ENCODE measurements at regions of chr1 and their contacts with region 1.

Region 1: GRCh38 chr1:208245185-208245705 is 1.1 kb upstream of the PLXNA2 start:
- DNase-seq: peak; percentile 81 to 82
- ATAC-seq: peak; percentile 68 to 71
- H3K4me3 ChIP-seq: peak overlapping the region; percentile 78 to 100 (median 86)
- H3K27ac ChIP-seq: peak overlapping the region; percentile 88 to 97 (median 92)
- H3K4me1 ChIP-seq: peaks cover 32% of the 10 kb centered on the region in 2 donors
- H3K27me3 ChIP-seq: no peaks in the 10 kb centered on the region
- CTCF ChIP-seq: peak; percentile 67 to 92 (median 85)
- POLR2A ChIP-seq: no peak

Region 2: DNA sequence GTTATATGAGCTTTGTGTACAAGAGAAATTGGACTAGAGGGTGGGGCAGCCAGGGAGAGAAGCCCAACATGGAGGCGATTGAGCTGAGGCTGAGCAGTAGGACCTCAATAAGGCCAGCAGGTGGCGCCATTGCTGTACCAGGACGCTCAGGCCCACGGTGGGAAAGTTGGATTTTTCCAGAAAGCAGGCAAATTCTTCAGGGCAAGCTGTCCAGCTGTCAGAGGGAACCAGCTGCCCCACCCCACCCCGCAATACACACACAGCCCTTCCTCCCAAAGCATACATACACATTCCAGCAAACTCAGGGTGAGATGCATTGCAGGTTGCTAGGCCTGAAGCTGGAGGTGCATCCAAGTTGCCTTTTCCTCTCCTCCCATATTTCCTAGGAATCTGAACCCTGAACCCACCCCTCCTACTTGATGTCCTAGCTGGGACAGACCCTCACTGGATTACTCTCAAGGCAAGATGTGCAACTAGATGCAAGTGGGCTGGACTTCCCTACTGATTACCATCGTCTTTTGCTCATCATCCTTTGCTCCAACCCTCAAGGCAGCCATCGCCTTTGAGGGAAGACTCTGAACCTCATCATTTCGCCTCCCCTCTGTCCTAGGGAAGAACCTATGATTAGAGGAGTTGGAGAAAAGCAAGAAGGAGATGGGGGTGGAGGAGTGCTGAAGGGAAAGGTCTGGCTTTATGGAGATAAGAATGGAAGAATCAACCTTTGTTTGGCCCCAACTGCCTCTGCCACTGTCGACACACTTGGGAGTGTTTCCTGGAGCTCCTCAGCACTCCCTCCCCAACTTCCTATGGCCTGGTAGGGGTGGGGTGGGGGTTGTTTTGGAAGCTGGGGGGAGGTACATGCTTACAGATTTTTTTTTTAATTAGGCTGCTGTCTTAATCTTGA is 359.9 kb before region 1 on chr1:
- in situ Hi-C with region 1: no loop called
- intact Hi-C with region 1: loop called (anchors 10 kb)
- DNase-seq: peak; percentile 72 to 76
- ATAC-seq: peak; percentile 83 to 89
- H3K4me3 ChIP-seq: no peak overlapping the region
- H3K27ac ChIP-seq: peak overlapping the region; percentile 21 to 81 (median 74)
- H3K4me1 ChIP-seq: peaks cover 42 to 55% of the 10 kb centered on the region in 2 donors
- H3K27me3 ChIP-seq: no peaks in the 10 kb centered on the region
- CTCF ChIP-seq: peak; percentile 95 to 98 (median 97)
- POLR2A ChIP-seq: no peak

Region 3: GRCh38 chr1:208024406-208024805 is 220.8 kb before region 1 on chr1:
- in situ Hi-C with region 1: loop called (anchors 5 to 10 kb)
- intact Hi-C with region 1: loop called (anchors 1 kb)
- DNase-seq: no peak
- ATAC-seq: no peak
- H3K4me3 ChIP-seq: no peak overlapping the region
- H3K27ac ChIP-seq: peak overlapping the region; percentile 55 to 66 (median 62)
- H3K4me1 ChIP-seq: peaks cover 14 to 19% of the 10 kb centered on the region in 2 donors
- H3K27me3 ChIP-seq: no peaks in the 10 kb centered on the region
- CTCF ChIP-seq: no peak
- POLR2A ChIP-seq: no peak

Region 4: GRCh38 chr1:208036109-208036808 is 209.0 kb before region 1 on chr1:
- in situ Hi-C with region 1: loop called in 1 of 4 experiments (anchors 10 kb)
- intact Hi-C with region 1: no loop called
- DNase-seq: no peak
- ATAC-seq: peak in 1 of 2 donors; percentile 48
- H3K4me3 ChIP-seq: no peak overlapping the region
- H3K27ac ChIP-seq: no peak overlapping the region
- H3K4me1 ChIP-seq: no peaks in the 10 kb centered on the region
- H3K27me3 ChIP-seq: no peaks in the 10 kb centered on the region
- CTCF ChIP-seq: no peak
- POLR2A ChIP-seq: no peak

Region 5: DNA sequence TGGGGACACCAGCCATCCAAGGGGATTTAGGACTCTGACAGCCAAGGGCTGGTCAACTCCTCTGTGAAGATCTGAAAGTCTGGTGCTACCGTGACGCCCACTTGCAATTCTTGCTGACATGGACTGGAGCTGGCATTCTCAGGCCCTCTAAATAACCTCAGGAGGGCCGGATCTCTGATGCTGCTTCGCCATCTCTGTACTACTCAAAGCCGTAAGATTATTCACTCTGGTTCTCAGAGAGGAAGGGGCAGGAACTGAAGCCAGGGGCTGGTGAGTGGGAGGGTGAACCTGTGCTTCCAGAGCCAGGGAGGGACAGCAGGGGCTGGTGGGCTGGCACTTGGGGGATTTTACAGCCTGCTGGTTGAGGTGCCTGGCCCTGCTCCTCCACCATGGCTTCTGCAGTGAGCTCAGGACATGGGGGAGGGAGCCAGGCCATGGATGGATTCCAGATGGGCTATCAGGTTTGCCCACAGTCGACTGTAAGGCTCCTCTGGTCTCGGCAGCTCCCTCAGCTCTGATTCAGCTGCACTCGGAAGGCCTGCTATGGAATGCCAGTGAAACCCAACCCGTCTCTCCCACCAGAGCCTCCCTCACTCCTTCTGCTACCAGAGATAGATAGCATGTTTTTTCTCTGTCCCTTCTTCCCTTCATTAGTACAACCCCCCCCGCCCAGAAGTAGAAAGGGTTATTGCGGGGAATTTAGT is 85.5 kb before region 1 on chr1:
- in situ Hi-C with region 1: no loop called
- intact Hi-C with region 1: loop called (anchors 1 kb)
- DNase-seq: peak; percentile 88 to 95
- ATAC-seq: peak; percentile 68 to 77
- H3K4me3 ChIP-seq: peak overlapping the region in 1 of 4 donors; percentile 7
- H3K27ac ChIP-seq: peak overlapping the region; percentile 83 to 90 (median 88)
- H3K4me1 ChIP-seq: peaks cover 87 to 90% of the 10 kb centered on the region in 2 donors
- H3K27me3 ChIP-seq: no peaks in the 10 kb centered on the region
- CTCF ChIP-seq: no peak
- POLR2A ChIP-seq: no peak

Region 6: DNA sequence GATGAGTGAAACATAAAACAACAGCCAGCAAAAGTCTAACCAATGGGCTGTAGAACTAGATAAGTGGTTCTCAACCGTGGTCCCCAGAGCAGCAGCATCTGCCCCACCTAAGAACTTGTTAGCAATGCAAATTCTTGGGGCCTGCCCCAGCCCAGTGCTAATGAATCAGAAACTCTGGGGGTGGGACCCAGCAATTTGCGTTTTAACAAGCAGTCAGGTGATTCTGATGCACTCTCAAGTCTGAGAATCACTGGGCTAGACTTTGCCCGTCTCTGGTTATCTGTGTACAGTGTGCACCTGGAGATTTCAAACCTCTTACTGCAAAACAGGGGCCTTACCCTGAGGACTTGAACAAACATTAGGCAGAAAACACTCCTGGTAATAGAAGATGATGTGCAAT is 67.6 kb before region 1 on chr1:
- in situ Hi-C with region 1: no loop called
- intact Hi-C with region 1: no loop called
- DNase-seq: no peak
- ATAC-seq: no peak
- H3K4me3 ChIP-seq: no peak overlapping the region
- H3K27ac ChIP-seq: no peak overlapping the region
- H3K4me1 ChIP-seq: peaks cover 48 to 65% of the 10 kb centered on the region in 2 donors
- H3K27me3 ChIP-seq: no peaks in the 10 kb centered on the region
- CTCF ChIP-seq: no peak
- POLR2A ChIP-seq: no peak

Region 7: DNA sequence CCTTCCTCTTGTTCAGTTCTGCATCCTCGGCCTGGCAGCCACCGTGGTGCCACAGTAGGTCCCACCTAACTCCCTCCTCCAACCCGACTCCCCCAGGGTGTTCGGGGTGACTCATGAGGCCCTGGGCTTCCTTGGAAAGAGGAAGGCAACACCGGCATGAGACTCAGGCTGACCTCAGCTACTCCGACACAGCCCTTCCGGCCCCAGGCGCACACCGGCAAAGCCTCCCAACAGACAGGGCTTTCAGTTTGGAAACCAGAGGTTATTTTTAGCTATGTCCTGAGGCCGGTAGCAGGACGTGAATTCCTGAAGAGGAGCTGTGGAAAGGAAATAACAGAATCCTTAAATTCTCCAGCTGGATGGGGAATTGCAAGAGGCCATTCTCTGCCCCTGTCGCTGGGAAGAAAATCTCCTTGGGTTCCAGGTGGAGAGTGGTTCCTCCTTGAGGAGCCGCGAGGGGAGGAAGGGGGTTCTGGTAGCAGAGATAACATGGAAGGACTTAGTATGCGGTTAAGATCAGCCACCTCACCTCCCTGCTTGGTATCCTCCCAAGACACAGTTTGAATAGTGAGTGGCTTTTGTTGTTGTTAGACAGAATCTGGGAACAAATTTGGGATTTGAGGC is 25.5 kb before region 1 on chr1:
- in situ Hi-C with region 1: no loop called
- intact Hi-C with region 1: loop called (anchors 1 kb)
- DNase-seq: peak; percentile 66 to 87
- ATAC-seq: peak; percentile 83 to 87
- H3K4me3 ChIP-seq: peak overlapping the region in 2 of 4 donors; percentile 10 to 30
- H3K27ac ChIP-seq: peak overlapping the region; percentile 81 to 86 (median 84)
- H3K4me1 ChIP-seq: peaks cover 60% of the 10 kb centered on the region in 2 donors
- H3K27me3 ChIP-seq: no peaks in the 10 kb centered on the region
- CTCF ChIP-seq: no peak
- POLR2A ChIP-seq: peak; percentile 20 to 38

Measured in gastrocnemius medialis (tissue), 4 donors.